Activated naive CD4-positive, alpha-beta T cell treated with anti-CD3 and anti-CD28 coated beads for 36 hours (primary cell): ENCODE measurements at regions of chr21 and their contacts with region 1.

Region 1: GRCh38 chr21:14737922-14738321 is 191.8 kb upstream of the SAMSN1 start:
- DNase-seq: peak; percentile 62
- H3K4me3 Mint-ChIP-seq: no peak overlapping the region
- H3K27ac Mint-ChIP-seq: no peak overlapping the region
- H3K4me1 Mint-ChIP-seq: peaks cover 31% of the 10 kb centered on the region
- H3K27me3 Mint-ChIP-seq: no peaks in the 10 kb centered on the region

Region 2: DNA sequence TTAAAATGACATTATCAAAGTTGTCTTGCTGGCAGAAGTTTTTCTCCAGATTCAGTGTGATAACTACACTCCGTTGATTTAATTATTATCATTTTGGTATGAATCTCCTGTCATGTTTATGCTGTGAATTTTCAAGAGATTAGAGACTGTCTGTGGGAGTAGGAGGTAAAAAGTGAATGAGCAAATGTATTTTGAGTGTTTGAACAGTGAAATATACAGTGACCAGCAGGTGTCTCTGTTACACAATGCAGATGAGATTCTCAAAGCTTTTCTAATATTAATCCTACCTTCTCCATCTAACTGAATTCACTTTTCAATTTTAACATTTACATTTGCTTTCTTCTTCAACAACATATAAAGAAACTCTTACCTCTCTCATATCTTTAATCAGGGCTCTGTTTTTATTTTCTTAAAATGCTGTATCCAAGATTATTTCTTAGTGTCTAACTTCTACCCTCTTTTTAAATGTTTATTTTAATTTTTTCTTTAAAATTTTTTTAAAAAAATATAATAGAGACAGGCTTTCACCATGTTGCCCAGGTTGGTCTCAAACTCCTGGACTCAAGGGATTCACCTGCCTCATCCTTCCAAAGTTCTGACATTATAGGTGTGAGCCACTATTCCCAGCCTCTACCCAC is 334.1 kb before region 1 on chr21:
- CTCF ChIA-PET with region 1: interaction called, 5 read pairs
- intact Hi-C with region 1: loop called (anchors 1 kb)
- DNase-seq: peak; percentile 9
- H3K4me3 Mint-ChIP-seq: no peak overlapping the region
- H3K27ac Mint-ChIP-seq: no peak overlapping the region
- H3K4me1 Mint-ChIP-seq: no peaks in the 10 kb centered on the region
- H3K27me3 Mint-ChIP-seq: no peaks in the 10 kb centered on the region

Region 3: DNA sequence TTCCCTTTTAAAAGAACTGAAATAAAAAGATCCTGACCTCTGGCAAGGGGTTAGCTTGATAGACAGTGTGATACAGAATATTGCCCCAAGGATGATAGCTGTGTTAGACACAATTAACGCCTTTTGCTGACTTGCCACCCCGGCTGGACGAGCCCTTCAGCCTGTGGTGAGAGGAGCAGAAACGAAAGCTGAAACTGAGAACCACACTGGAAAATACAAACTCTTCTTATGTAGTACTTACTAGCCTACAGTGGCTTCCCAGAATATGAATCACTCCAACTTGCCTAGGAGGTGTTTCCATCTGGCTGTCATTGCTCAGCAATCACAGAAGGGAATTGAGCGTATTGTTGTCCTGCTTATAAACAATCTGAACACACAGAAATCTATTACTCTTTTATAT is 214.7 kb before region 1 on chr21:
- CTCF ChIA-PET with region 1: interaction called, 20 read pairs
- intact Hi-C with region 1: no loop called
- DNase-seq: peak; percentile 51
- H3K4me3 Mint-ChIP-seq: peak overlapping the region; percentile 55
- H3K27ac Mint-ChIP-seq: peak overlapping the region; percentile 68
- H3K4me1 Mint-ChIP-seq: peaks cover 53% of the 10 kb centered on the region
- H3K27me3 Mint-ChIP-seq: no peaks in the 10 kb centered on the region

Region 4: GRCh38 chr21:14630556-14631069 is 107.3 kb before region 1 on chr21:
- CTCF ChIA-PET with region 1: interaction called, 4 read pairs
- intact Hi-C with region 1: loop called (anchors 2 kb)
- DNase-seq: no peak
- H3K4me3 Mint-ChIP-seq: no peak overlapping the region
- H3K27ac Mint-ChIP-seq: peak overlapping the region; percentile 65
- H3K4me1 Mint-ChIP-seq: peaks cover 19% of the 10 kb centered on the region
- H3K27me3 Mint-ChIP-seq: no peaks in the 10 kb centered on the region

Region 5: GRCh38 chr21:14686466-14687267 is 51.3 kb before region 1 on chr21:
- CTCF ChIA-PET with region 1: interaction called, 5 read pairs
- intact Hi-C with region 1: loop called (anchors 2 kb)
- DNase-seq: no peak
- H3K4me3 Mint-ChIP-seq: no peak overlapping the region
- H3K27ac Mint-ChIP-seq: no peak overlapping the region
- H3K4me1 Mint-ChIP-seq: peaks cover 43% of the 10 kb centered on the region
- H3K27me3 Mint-ChIP-seq: no peaks in the 10 kb centered on the region

Region 6: GRCh38 chr21:14956807-14957206 is 218.9 kb after region 1 on chr21:
- CTCF ChIA-PET with region 1: no interaction called
- intact Hi-C with region 1: no loop called
- DNase-seq: no peak
- H3K4me3 Mint-ChIP-seq: no peak overlapping the region
- H3K27ac Mint-ChIP-seq: no peak overlapping the region
- H3K4me1 Mint-ChIP-seq: no peaks in the 10 kb centered on the region
- H3K27me3 Mint-ChIP-seq: no peaks in the 10 kb centered on the region